Activated T-helper 2 cell treated with anti-CD3 and anti-CD28 coated beads, Interferon-gamma antibody, Interleukin-2, Interleukin-4, amounts not matched to agents 10 μg/mL and 5 μg/mL and 100 μg/mL, durations not matched to agents 14 hours and 24 hours and 36 hours (primary cell): ENCODE measurements at regions of chr4 and their contacts with region 1.

Region 1: GRCh38 chr4:128454281-128455075 is 166.9 kb upstream of the PGRMC2 start:
- DNase-seq: peak; percentile 41
- H3K4me3 Mint-ChIP-seq: no peak overlapping the region
- H3K27ac Mint-ChIP-seq: no peak overlapping the region
- H3K4me1 Mint-ChIP-seq: peaks cover 10% of the 10 kb centered on the region
- H3K27me3 Mint-ChIP-seq: peaks cover 2% of the 10 kb centered on the region

Region 2: GRCh38 chr4:128517739-128518510 is 63.4 kb after region 1 on chr4:
- intact Hi-C with region 1: loop called (anchors 5 kb)
- DNase-seq: no peak
- H3K4me3 Mint-ChIP-seq: no peak overlapping the region
- H3K27ac Mint-ChIP-seq: peak overlapping the region; percentile 13
- H3K4me1 Mint-ChIP-seq: peaks cover 21% of the 10 kb centered on the region
- H3K27me3 Mint-ChIP-seq: no peaks in the 10 kb centered on the region

Region 3: DNA sequence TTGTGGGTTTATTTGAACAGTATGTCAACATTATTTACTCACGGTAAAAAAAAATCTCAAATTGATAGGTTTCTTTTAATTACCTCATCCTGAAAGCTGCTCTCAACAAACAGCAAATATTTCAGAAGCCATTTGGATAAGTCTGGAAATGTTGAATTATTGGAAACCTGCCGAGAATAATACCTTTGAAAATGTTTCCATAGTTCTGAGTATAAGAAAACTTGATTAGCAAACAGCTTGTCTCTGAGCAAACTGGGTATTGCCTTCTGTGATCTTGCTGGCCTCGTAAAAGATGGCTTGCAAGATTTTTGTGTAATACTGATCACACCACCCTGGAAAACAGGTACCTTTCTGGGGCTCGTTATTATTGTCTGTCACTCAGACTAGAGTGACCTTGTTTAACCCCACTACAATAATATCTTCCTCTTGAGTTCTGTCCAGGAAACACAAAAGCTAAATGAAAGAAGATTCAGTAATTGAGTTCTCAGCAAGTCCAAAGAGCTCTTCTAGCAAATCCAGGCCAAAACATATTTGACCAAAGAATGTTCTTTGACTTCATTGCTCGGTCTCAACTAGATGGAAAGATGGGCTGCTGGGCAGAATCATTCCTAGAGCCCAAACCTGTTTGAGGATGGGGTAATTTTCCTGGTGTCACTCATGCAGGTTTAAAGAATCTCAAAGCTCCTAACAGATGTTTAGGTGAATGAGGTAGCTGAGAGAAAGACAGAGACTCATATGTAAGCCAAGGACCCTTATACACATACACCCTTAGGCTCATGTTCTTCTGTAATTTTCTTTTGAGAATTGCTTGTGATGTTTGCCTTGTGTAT is 99.4 kb after region 1 on chr4:
- intact Hi-C with region 1: loop called (anchors 5 kb)
- DNase-seq: no peak
- H3K4me3 Mint-ChIP-seq: peak overlapping the region; percentile 87
- H3K27ac Mint-ChIP-seq: no peak overlapping the region
- H3K4me1 Mint-ChIP-seq: peaks cover 9% of the 10 kb centered on the region
- H3K27me3 Mint-ChIP-seq: peaks cover 28% of the 10 kb centered on the region

Region 4: DNA sequence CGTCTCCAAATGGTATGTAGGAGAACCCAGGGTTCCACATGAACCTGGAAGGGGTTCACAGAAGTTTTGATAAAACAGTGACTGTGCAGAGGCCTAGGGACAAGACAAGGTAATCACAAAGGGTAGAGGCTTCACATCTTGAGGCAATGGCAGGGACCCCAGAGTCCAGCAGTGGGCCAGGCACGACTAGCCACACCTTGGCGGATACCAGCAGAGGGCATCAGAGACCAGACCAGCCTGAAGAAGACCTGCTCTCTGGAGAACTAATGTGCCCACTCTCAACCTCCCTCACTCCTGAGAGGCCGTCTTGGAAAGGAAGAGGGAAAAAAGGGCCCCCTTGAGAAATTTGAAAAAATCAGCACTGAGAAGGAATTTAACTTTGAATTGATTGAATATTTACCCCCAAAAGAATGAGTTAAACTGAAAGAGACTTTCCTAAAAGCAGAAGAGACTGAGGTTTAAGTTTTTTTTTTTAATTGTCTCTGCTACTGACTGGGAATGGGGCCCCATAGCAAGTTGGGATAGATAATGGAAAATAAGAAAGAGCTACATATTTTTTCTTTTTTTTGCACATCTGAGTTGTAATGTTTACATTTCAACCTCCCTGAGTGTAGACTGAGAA is 111.2 kb after region 1 on chr4:
- intact Hi-C with region 1: loop called (anchors 5 kb)
- DNase-seq: no peak
- H3K4me3 Mint-ChIP-seq: no peak overlapping the region
- H3K27ac Mint-ChIP-seq: no peak overlapping the region
- H3K4me1 Mint-ChIP-seq: no peaks in the 10 kb centered on the region
- H3K27me3 Mint-ChIP-seq: peaks cover 3% of the 10 kb centered on the region

Region 5: DNA sequence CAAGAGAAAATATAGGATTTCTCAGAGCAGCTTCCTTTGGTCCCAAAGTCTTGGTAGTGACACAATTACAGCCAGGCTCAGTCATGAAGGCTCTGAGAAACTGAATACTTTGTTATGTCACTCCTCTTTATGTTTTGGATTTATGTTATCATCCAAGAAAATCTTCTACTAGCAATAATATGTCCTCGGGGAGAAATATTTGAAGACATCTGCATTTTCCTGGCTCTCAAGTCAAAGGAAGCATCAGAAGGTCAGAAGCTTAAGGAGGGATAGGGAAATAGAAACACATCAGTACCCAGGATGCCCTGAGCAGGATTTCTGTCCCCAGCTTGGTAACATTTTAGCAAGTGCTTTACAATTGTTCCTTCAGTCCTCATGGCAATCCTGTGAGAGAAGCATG is 695.4 kb after region 1 on chr4:
- intact Hi-C with region 1: no loop called
- DNase-seq: no peak
- H3K4me3 Mint-ChIP-seq: no peak overlapping the region
- H3K27ac Mint-ChIP-seq: no peak overlapping the region
- H3K4me1 Mint-ChIP-seq: no peaks in the 10 kb centered on the region
- H3K27me3 Mint-ChIP-seq: peaks cover 8% of the 10 kb centered on the region